Mammary epithelial cell (primary cell): ENCODE measurements at regions of chr15 and their contacts with region 1.

Region 1: DNA sequence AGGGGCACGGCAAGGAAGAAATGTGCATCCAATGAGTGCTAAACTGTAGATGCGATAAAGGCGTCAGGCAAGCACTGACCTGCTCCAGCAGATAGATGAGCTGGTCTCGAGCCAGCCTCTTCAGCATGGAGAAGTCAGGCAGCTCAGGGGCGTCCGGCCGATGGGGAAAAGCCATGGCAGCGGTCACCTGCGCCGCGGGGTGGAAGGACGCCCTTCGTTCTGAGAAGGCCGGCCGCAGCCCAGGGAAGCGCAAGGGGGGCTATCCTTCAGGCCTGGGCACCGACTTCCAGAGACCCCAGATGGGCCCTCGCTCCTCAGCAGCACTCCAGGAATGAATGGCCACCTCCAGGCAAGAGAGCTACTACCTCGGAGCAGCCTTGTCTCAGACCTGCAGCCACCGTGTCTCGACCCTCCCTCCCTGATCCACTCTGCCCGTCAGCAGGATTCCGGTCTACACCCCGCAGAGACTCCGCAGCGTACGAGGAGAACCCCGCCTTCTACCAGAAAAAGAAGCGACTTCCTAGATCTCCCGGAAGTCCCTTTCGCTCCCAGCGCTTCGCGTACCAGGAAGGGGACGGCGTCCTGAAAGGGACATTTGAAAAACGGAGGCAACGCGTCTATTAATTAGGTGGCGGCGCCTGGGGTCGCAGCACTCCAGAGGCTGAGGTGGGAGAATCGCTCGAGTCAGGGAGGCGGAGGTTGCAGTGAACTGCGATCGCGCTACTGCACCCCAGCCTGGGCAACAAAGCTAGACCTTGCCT is at the start of gene VPS33B:
- DNase-seq: peak; percentile 83
- H3K4me3 ChIP-seq: peak within 1 kb of the TSS; percentile 52 to 77 (median 75)
- H3K27ac ChIP-seq: peak within 1 kb of the TSS; percentile 19
- H3K4me1 ChIP-seq: peaks cover 10% of the 10 kb centered on the region
- H3K27me3 ChIP-seq: no peaks in the 10 kb centered on the region
- CTCF ChIP-seq: no peak
- total RNA-seq, gene VPS33B: 8.7 to 19.9 TPM

Region 2: DNA sequence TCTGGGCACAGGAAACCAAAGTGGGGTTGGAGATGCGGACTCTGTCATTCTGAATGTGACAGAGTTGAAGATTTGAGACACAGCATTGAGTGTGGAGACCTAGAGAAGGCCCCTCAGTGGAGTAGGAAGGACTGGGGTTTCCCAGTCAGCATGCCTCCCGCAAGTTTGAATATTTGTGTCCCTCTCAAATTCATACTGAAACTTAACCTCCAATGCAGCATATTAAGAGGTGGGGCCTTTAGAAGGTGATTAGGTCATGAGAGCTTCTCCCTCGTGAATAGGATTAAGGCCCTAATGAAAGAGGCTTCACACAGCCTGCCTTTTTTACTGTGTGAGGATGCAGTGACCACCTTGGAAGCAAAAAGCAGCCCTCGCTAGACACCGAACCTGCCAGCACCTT is 97.9 kb before region 1 on chr15:
- CTCF ChIA-PET with region 1: no interaction called
- dilution Hi-C with region 1: no loop called
- in situ Hi-C with region 1: no loop called
- intact Hi-C with region 1: no loop called
- DNase-seq: no peak
- H3K4me3 ChIP-seq: no peak overlapping the region
- H3K27ac ChIP-seq: no peak overlapping the region
- H3K4me1 ChIP-seq: peaks cover 4% of the 10 kb centered on the region
- H3K27me3 ChIP-seq: no peaks in the 10 kb centered on the region
- CTCF ChIP-seq: no peak

Region 3: GRCh38 chr15:90994417-90995311 is 27.6 kb before region 1 on chr15 and contains the start of gene PRC1:
- CTCF ChIA-PET with region 1: no interaction called
- dilution Hi-C with region 1: no loop called
- in situ Hi-C with region 1: no loop called
- intact Hi-C with region 1: loop called (anchors 2 kb)
- DNase-seq: peak; percentile 99
- H3K4me3 ChIP-seq: peak within 1 kb of the TSS; percentile 83 to 100 (median 96)
- H3K27ac ChIP-seq: peak within 1 kb of the TSS; percentile 94
- H3K4me1 ChIP-seq: peaks cover 8% of the 10 kb centered on the region
- H3K27me3 ChIP-seq: no peaks in the 10 kb centered on the region
- CTCF ChIP-seq: no peak
- total RNA-seq, gene PRC1: 4.5 to 100 TPM

Region 4: DNA sequence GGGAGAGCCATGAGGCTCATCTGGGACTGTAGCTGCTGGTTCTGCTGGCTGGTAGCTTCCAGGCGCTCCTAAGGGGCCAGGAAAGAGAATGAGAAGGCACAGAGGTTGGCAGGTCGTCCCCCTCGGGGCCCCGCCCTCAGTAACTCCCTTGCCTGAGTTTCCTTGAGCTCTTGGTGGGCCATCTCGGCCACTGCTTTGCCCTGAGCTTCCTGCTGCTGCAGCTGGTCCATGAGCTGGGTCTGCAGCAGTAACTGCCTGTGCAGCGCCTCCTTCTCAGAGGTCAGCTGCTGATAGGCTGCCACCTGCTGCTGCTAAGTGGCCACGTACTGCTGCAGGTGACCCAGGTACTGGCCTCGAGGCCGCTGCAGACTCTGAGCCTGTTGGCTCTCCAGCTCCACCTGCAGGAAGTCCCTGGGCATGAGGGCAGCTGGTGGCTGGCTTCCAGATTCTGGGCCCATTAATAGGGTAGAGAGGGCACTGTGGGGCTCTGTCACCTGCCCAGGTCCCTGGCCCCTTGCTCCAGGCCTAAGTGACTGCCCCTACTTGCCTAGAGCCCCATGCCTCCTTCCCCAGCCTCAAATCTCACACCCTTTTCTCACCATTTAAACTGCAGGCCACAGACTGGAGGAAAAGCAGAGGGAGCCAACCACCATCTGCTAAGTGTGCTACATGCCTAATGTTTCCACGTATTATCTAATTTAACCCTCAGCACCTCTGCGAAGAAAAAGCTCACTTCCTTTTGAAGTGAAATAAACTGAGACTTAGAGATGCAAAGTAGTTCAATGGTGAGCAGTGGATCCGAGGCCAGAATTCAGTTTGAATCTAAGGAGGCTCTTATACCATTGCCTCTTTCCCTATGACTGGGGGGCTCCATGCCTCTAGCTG is 10.9 kb after region 1 on chr15:
- CTCF ChIA-PET with region 1: interaction called, 7 read pairs
- dilution Hi-C with region 1: no loop called
- in situ Hi-C with region 1: no loop called
- intact Hi-C with region 1: loop called (anchors 1 kb)
- DNase-seq: peak; percentile 63
- H3K4me3 ChIP-seq: no peak overlapping the region
- H3K27ac ChIP-seq: no peak overlapping the region
- H3K4me1 ChIP-seq: no peaks in the 10 kb centered on the region
- H3K27me3 ChIP-seq: peaks cover 5% of the 10 kb centered on the region
- CTCF ChIP-seq: peak; percentile 59 to 80